ENCODE measurements at regions of chr4 and their contacts with region 1.

Region 1: GRCh38 chr4:109826719-109827118 is 1.1 kb upstream of the RRH start:
- DNase-seq: peak in 1 of 35 experiments; percentile 46
- ATAC-seq: peak in 2 of 4 experiments; percentile 52 to 64
- H3K4me3 ChIP-seq: no peak overlapping the region
- H3K4me3 Mint-ChIP-seq: no peak overlapping the region
- H3K27ac ChIP-seq: no peak overlapping the region
- H3K27ac Mint-ChIP-seq: no peak overlapping the region
- H3K4me1 ChIP-seq: no peaks in the 10 kb centered on the region
- H3K4me1 Mint-ChIP-seq: peaks cover 0 to 2% (median 0%) of the 10 kb centered on the region in 3 donors
- H3K27me3 ChIP-seq: no peaks in the 10 kb centered on the region
- H3K27me3 Mint-ChIP-seq: no peaks in the 10 kb centered on the region

Region 2: DNA sequence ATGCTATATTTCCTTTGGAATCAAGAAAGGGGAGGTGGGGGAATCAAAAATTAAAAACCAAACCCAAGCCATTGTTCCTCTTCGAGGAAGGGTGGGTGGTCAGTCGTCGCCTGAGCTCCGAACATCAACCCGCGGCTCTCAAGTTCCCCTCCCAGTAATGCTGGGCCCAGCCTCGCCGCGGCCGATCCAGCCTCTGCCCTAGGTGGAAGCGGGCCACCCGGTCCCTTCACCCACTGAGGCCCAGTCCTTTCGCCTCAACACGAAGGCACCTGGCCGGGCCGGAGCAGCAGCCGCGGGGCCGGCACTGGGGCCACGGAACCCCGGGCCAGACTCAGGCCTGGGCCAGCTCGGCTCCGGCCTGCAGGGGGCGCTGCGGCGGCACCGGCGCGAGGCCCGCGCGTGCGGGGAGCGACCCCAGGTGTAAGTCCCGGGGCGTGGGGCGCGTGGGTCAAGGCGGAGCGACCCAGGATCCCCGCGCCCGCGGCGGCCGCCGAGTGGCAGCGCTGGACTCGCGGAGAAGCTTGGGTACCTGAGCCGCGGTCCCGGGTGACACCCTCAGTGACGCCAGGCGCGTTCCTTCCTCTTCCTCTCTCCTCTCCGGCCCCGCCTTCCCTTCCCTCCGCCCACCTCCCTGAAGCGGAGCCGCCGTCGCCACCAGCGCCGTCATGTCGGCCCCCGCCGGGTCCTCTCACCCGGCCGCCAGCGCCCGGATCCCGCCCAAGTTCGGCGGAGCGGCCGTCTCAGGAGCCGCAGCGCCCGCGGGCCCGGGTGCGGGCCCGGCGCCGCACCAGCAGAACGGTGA is 393.3 kb before region 1 on chr4 and contains the start of gene SEC24B:
- CTCF ChIA-PET with region 1: interaction called, 10 read pairs
- POLR2A ChIA-PET with region 1: no interaction called
- DNase-seq: peak; percentile 78 to 94 (median 88)
- ATAC-seq: peak; percentile 91 to 93 (median 92)
- H3K4me3 ChIP-seq: peak within 1 kb of the TSS; percentile 84 to 88
- H3K4me3 Mint-ChIP-seq: peak within 1 kb of the TSS; percentile 77 to 88 (median 87)
- H3K27ac ChIP-seq: peak within 1 kb of the TSS; percentile 91
- H3K27ac Mint-ChIP-seq: peak within 1 kb of the TSS; percentile 82 to 92
- H3K4me1 ChIP-seq: peaks cover 19 to 31% of the 10 kb centered on the region in 2 experiments
- H3K4me1 Mint-ChIP-seq: peaks cover 51 to 52% (median 52%) of the 10 kb centered on the region in 3 donors
- H3K27me3 ChIP-seq: no peaks in the 10 kb centered on the region
- H3K27me3 Mint-ChIP-seq: no peaks in the 10 kb centered on the region
- total RNA-seq, gene SEC24B: 28.8 to 38.6 (median 32.6) TPM

Region 3: GRCh38 chr4:109486007-109486406 is 340.7 kb before region 1 on chr4:
- CTCF ChIA-PET with region 1: no interaction called
- POLR2A ChIA-PET with region 1: interaction called in 1 of 2 experiments, 10 read pairs
- DNase-seq: no peak
- ATAC-seq: no peak
- H3K4me3 ChIP-seq: no peak overlapping the region
- H3K4me3 Mint-ChIP-seq: no peak overlapping the region
- H3K27ac ChIP-seq: no peak overlapping the region
- H3K27ac Mint-ChIP-seq: no peak overlapping the region
- H3K4me1 ChIP-seq: no peaks in the 10 kb centered on the region
- H3K4me1 Mint-ChIP-seq: peaks cover 31 to 42% (median 38%) of the 10 kb centered on the region in 3 donors
- H3K27me3 ChIP-seq: no peaks in the 10 kb centered on the region
- H3K27me3 Mint-ChIP-seq: no peaks in the 10 kb centered on the region

Region 4: DNA sequence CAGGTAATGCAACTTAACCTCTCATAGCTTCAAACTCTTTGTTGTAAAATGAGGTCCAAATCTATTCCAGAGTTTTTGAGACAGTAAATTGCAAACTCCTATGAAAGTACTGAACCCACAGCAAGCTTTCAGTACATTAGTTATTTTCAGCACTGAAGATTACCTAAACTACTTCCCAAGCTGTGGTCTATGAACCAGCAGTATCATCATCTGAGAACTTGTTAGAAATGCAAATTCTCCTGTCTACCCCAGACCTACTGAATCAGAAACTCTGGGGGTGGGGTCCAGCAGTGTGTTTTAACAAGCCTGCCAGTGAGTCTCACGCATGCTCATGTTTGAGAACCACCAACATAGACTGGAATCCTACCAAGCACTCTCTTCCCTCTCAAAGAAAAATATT is 117.7 kb before region 1 on chr4:
- CTCF ChIA-PET with region 1: no interaction called
- POLR2A ChIA-PET with region 1: interaction called in 1 of 2 experiments, 10 read pairs
- DNase-seq: no peak
- ATAC-seq: no peak
- H3K4me3 ChIP-seq: no peak overlapping the region
- H3K4me3 Mint-ChIP-seq: no peak overlapping the region
- H3K27ac ChIP-seq: no peak overlapping the region
- H3K27ac Mint-ChIP-seq: no peak overlapping the region
- H3K4me1 ChIP-seq: no peaks in the 10 kb centered on the region
- H3K4me1 Mint-ChIP-seq: peaks cover 3 to 4% (median 3%) of the 10 kb centered on the region in 3 donors
- H3K27me3 ChIP-seq: no peaks in the 10 kb centered on the region
- H3K27me3 Mint-ChIP-seq: no peaks in the 10 kb centered on the region

Region 5: GRCh38 chr4:109803924-109804571 is 22.7 kb before region 1 on chr4:
- CTCF ChIA-PET with region 1: no interaction called
- POLR2A ChIA-PET with region 1: no interaction called
- DNase-seq: peak in 5 of 35 experiments; percentile 2 to 59 (median 6)
- ATAC-seq: peak in 2 of 4 experiments; percentile 40 to 43
- H3K4me3 ChIP-seq: no peak overlapping the region
- H3K4me3 Mint-ChIP-seq: no peak overlapping the region
- H3K27ac ChIP-seq: no peak overlapping the region
- H3K27ac Mint-ChIP-seq: no peak overlapping the region
- H3K4me1 ChIP-seq: no peaks in the 10 kb centered on the region
- H3K4me1 Mint-ChIP-seq: no peaks in the 10 kb centered on the region
- H3K27me3 ChIP-seq: no peaks in the 10 kb centered on the region
- H3K27me3 Mint-ChIP-seq: peaks cover 5 to 8% of the 10 kb centered on the region in 2 donors

Region 6: DNA sequence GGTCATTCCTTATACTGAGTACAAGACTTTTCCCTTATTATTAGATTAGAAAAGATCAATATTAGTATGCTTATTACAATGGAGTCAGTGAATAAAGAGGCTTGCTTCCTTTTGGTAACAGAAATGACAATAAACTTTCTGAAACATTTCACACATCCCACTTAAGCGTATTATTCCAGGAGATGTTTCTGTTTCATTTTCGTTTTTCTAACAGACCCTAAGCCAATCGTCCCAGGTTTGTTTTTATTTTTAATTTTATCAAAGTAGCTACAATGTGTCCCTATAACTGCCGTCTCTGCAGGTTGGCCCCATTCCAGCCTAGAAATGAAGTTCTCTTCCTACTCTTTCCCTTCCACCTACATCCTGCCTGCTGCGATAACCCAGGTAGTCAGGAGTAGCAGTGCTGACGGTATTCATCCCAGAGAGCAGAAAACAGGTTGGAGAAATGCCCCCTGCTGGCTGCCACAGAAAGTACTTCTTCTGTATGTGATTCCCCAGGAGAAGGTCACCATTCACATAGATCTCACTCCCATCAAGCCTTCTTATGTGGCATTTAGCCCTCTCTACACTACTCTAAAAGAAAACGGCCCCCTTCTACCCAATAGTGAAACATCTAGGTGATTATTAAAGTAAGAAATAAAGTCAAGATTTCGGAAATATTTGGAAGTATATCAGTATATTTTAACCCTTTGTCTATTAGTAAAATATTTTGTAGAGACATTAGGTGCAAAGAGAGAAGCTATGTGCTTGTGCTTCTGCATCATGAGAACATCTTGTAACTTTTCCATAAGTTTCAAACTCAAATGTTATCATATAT is 689.6 kb after region 1 on chr4:
- CTCF ChIA-PET with region 1: no interaction called
- POLR2A ChIA-PET with region 1: no interaction called
- DNase-seq: peak; percentile 31 to 85 (median 62)
- ATAC-seq: peak; percentile 76 to 91 (median 88)
- H3K4me3 ChIP-seq: peak overlapping the region; percentile 60 to 70
- H3K4me3 Mint-ChIP-seq: peak overlapping the region; percentile 90 to 95 (median 90)
- H3K27ac ChIP-seq: peak overlapping the region; percentile 32
- H3K27ac Mint-ChIP-seq: peak overlapping the region; percentile 81 to 85
- H3K4me1 ChIP-seq: peaks cover 0 to 3% of the 10 kb centered on the region in 2 experiments
- H3K4me1 Mint-ChIP-seq: peaks cover 11 to 14% (median 13%) of the 10 kb centered on the region in 3 donors
- H3K27me3 ChIP-seq: no peaks in the 10 kb centered on the region
- H3K27me3 Mint-ChIP-seq: peaks cover 4 to 8% of the 10 kb centered on the region in 2 donors